Naive thymus-derived CD4-positive, alpha-beta T cell (primary cell): ENCODE measurements at regions of chr7 and their contacts with region 1.

Region 1: GRCh38 chr7:23013715-23014649 is at the start of gene HYCC1:
- DNase-seq: peak; percentile 96 to 100 (median 99)
- ATAC-seq: peak; percentile 99
- H3K4me3 ChIP-seq: peak within 1 kb of the TSS; percentile 82
- H3K4me3 Mint-ChIP-seq: peak within 1 kb of the TSS; percentile 8 to 98 (median 96)
- H3K27ac ChIP-seq: peak within 1 kb of the TSS; percentile 67
- H3K27ac Mint-ChIP-seq: peak within 1 kb of the TSS; percentile 60 to 96 (median 88)
- H3K4me1 ChIP-seq: peaks cover 5 to 15% of the 10 kb centered on the region in 2 donors
- H3K4me1 Mint-ChIP-seq: peaks cover 8 to 35% (median 27%) of the 10 kb centered on the region in 7 donors
- H3K27me3 ChIP-seq: no peaks in the 10 kb centered on the region
- H3K27me3 Mint-ChIP-seq: peaks cover 0 to 3% (median 0%) of the 10 kb centered on the region in 5 donors
- total RNA-seq, gene HYCC1: 14.2 to 67.0 (median 18.3) TPM

Region 2: GRCh38 chr7:22697876-22698606 is 315.9 kb before region 1 on chr7:
- CTCF ChIA-PET with region 1: no interaction called
- POLR2A ChIA-PET with region 1: no interaction called
- intact Hi-C with region 1: loop called in 1 of 2 experiments (anchors 5 kb)
- DNase-seq: peak in 4 of 9 donors; percentile 10 to 25 (median 16)
- ATAC-seq: peak; percentile 79
- H3K4me3 ChIP-seq: no peak overlapping the region
- H3K4me3 Mint-ChIP-seq: peak overlapping the region in 3 of 10 donors; percentile 0 to 69 (median 31)
- H3K27ac ChIP-seq: no peak overlapping the region
- H3K27ac Mint-ChIP-seq: peak overlapping the region in 2 of 9 donors; percentile 23 to 73
- H3K4me1 ChIP-seq: peaks cover 3 to 31% of the 10 kb centered on the region in 2 donors
- H3K4me1 Mint-ChIP-seq: peaks cover 32 to 77% (median 46%) of the 10 kb centered on the region in 7 donors
- H3K27me3 ChIP-seq: no peaks in the 10 kb centered on the region
- H3K27me3 Mint-ChIP-seq: peaks cover 0 to 19% (median 0%) of the 10 kb centered on the region in 5 donors

Region 3: GRCh38 chr7:22854158-22855048 is 159.6 kb before region 1 on chr7:
- CTCF ChIA-PET with region 1: no interaction called
- POLR2A ChIA-PET with region 1: interaction called, 3 read pairs
- intact Hi-C with region 1: loop called (anchors 1 kb)
- DNase-seq: peak in 8 of 9 donors; percentile 9 to 87 (median 70)
- ATAC-seq: peak; percentile 39
- H3K4me3 ChIP-seq: peak overlapping the region; percentile 88
- H3K4me3 Mint-ChIP-seq: peak overlapping the region; percentile 90 to 97 (median 94)
- H3K27ac ChIP-seq: peak overlapping the region; percentile 93
- H3K27ac Mint-ChIP-seq: peak overlapping the region; percentile 85 to 97 (median 92)
- H3K4me1 ChIP-seq: peaks cover 0 to 4% of the 10 kb centered on the region in 2 donors
- H3K4me1 Mint-ChIP-seq: peaks cover 11 to 37% (median 16%) of the 10 kb centered on the region in 7 donors
- H3K27me3 ChIP-seq: no peaks in the 10 kb centered on the region
- H3K27me3 Mint-ChIP-seq: peaks cover 0 to 5% (median 0%) of the 10 kb centered on the region in 5 donors

Region 4: DNA sequence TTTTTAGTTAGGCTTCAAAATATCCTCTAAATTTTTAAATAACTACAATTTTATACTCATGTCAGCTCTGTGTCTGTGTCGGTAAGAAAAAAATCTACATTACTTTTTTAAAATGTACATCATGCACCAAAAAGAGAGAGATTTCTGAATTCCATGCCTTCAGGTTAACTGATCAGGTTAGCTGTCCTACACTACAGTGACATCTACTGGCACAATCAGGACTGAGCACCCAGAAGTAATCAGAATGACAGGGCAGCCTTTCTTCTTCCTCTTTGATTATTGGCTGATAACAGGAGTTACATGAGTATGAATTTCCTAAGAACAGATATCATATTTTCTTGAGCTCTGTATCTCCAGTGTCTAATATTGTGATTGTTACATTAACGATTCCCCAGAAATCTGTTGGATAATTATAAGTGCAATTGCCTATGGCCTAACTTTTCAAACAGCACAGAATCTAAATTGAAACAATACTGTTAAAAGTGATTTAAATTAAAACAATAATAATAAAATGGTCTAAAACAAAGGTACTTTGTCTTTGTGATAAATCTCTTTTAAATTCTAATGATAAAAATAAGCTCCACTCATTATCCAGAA is 41.7 kb after region 1 on chr7:
- CTCF ChIA-PET with region 1: interaction called, 3 read pairs
- POLR2A ChIA-PET with region 1: interaction called, 4 read pairs
- intact Hi-C with region 1: loop called (anchors 1 kb)
- DNase-seq: peak in 8 of 9 donors; percentile 42 to 71 (median 64)
- ATAC-seq: peak; percentile 98
- H3K4me3 ChIP-seq: no peak overlapping the region
- H3K4me3 Mint-ChIP-seq: no peak overlapping the region
- H3K27ac ChIP-seq: no peak overlapping the region
- H3K27ac Mint-ChIP-seq: no peak overlapping the region
- H3K4me1 ChIP-seq: no peaks in the 10 kb centered on the region
- H3K4me1 Mint-ChIP-seq: peaks cover 0 to 10% (median 0%) of the 10 kb centered on the region in 7 donors
- H3K27me3 ChIP-seq: no peaks in the 10 kb centered on the region
- H3K27me3 Mint-ChIP-seq: peaks cover 0 to 7% (median 0%) of the 10 kb centered on the region in 5 donors

Region 5: GRCh38 chr7:23273141-23273599 is 259.2 kb after region 1 on chr7:
- CTCF ChIA-PET with region 1: no interaction called
- POLR2A ChIA-PET with region 1: no interaction called
- intact Hi-C with region 1: loop called in 1 of 2 experiments (anchors 1 kb)
- DNase-seq: peak; percentile 64 to 85 (median 80)
- ATAC-seq: peak; percentile 99
- H3K4me3 ChIP-seq: no peak overlapping the region
- H3K4me3 Mint-ChIP-seq: peak overlapping the region; percentile 14 to 82 (median 70)
- H3K27ac ChIP-seq: no peak overlapping the region
- H3K27ac Mint-ChIP-seq: peak overlapping the region in 4 of 9 donors; percentile 3 to 54 (median 23)
- H3K4me1 ChIP-seq: peaks cover 0 to 4% of the 10 kb centered on the region in 2 donors
- H3K4me1 Mint-ChIP-seq: peaks cover 2 to 16% (median 10%) of the 10 kb centered on the region in 7 donors
- H3K27me3 ChIP-seq: no peaks in the 10 kb centered on the region
- H3K27me3 Mint-ChIP-seq: peaks cover 0 to 9% (median 4%) of the 10 kb centered on the region in 5 donors

Region 6: DNA sequence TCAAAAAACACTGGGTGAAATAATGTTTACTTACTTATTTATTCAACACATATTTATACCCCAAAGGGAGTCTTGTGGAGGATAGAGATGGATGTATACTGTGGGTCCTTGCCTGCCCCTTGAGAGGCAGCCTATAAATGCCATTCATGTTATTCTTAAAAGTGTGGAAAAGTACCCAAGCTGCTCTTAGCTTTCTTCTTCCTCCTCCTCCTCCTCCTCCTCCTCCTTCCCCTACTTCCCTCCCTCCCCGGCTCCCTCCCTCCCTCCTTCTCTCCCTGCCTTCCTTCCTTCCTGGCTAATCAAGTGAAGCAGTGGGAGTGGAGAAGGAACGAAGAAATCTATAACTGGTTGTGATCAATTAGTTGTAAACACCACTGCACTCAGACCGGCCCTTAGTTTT is 477.5 kb after region 1 on chr7:
- CTCF ChIA-PET with region 1: no interaction called
- POLR2A ChIA-PET with region 1: no interaction called
- intact Hi-C with region 1: no loop called
- DNase-seq: no peak
- ATAC-seq: no peak
- H3K4me3 ChIP-seq: no peak overlapping the region
- H3K4me3 Mint-ChIP-seq: peak overlapping the region; percentile 28 to 90 (median 84)
- H3K27ac ChIP-seq: no peak overlapping the region
- H3K27ac Mint-ChIP-seq: peak overlapping the region in 2 of 9 donors; percentile 75 to 82
- H3K4me1 ChIP-seq: peaks cover 4 to 6% of the 10 kb centered on the region in 2 donors
- H3K4me1 Mint-ChIP-seq: peaks cover 3 to 13% (median 10%) of the 10 kb centered on the region in 7 donors
- H3K27me3 ChIP-seq: no peaks in the 10 kb centered on the region
- H3K27me3 Mint-ChIP-seq: no peaks in the 10 kb centered on the region

Region 7: GRCh38 chr7:23531794-23532489 is 518.0 kb after region 1 on chr7 and contains the start of gene TRA2A:
- CTCF ChIA-PET with region 1: interaction called, 7 read pairs
- POLR2A ChIA-PET with region 1: no interaction called
- intact Hi-C with region 1: loop called in 1 of 2 experiments (anchors 5 kb)
- DNase-seq: peak; percentile 93 to 97 (median 95)
- ATAC-seq: peak; percentile 96
- H3K4me3 ChIP-seq: peak within 1 kb of the TSS; percentile 80
- H3K4me3 Mint-ChIP-seq: peak within 1 kb of the TSS; percentile 89 to 100 (median 99)
- H3K27ac ChIP-seq: peak within 1 kb of the TSS; percentile 93
- H3K27ac Mint-ChIP-seq: peak within 1 kb of the TSS; percentile 98 to 100 (median 100)
- H3K4me1 ChIP-seq: peaks cover 30 to 31% of the 10 kb centered on the region in 2 donors
- H3K4me1 Mint-ChIP-seq: peaks cover 28 to 51% (median 46%) of the 10 kb centered on the region in 7 donors
- H3K27me3 ChIP-seq: no peaks in the 10 kb centered on the region
- H3K27me3 Mint-ChIP-seq: no peaks in the 10 kb centered on the region
- total RNA-seq, gene TRA2A: 131 to 263 (median 163) TPM

Region 8: DNA sequence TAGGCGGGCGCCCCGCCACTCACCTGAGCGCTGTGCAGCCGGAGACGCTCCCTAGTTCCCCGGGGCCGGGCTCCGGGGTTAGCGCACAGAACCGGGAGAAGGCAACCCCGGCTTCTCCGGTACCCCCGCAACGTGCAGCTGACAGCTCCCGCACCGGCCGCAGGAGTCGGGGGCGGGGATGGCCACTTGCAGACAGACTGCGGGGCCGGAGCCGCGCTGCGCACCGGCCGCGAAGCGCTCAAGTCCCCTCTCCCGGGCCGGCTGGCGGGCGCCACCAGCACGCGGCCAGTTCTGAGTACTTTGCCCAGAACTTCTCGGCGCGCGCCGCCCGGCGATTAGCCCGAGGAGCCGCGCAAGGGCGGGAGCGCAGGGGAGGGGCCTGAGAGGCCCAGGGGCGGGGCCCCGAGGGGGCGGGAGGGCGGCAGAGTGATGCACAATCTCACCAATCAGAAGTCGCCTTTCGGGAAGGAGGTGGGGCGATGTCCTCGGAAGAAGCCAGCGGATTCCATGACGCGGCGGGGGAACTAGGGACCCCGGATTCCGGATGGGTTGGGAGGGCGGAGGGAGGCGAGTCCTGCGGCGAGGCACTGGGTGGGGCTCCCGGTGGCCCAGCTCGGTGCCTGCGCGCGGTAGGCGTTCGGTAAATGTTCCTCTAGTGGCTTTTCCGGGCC is 1966.0 kb after region 1 on chr7 and contains the start of gene OSBPL3:
- CTCF ChIA-PET with region 1: no interaction called
- POLR2A ChIA-PET with region 1: no interaction called
- intact Hi-C with region 1: loop called in 1 of 2 experiments (anchors 10 kb)
- DNase-seq: peak; percentile 86 to 96 (median 93)
- ATAC-seq: peak; percentile 95
- H3K4me3 ChIP-seq: peak within 1 kb of the TSS; percentile 84
- H3K4me3 Mint-ChIP-seq: peak within 1 kb of the TSS; percentile 93 to 97 (median 96)
- H3K27ac ChIP-seq: peak within 1 kb of the TSS; percentile 69
- H3K27ac Mint-ChIP-seq: peak within 1 kb of the TSS; percentile 73 to 95 (median 89)
- H3K4me1 ChIP-seq: peaks cover 26 to 32% of the 10 kb centered on the region in 2 donors
- H3K4me1 Mint-ChIP-seq: peaks cover 40 to 65% (median 56%) of the 10 kb centered on the region in 7 donors
- H3K27me3 ChIP-seq: no peaks in the 10 kb centered on the region
- H3K27me3 Mint-ChIP-seq: peaks cover 0 to 4% (median 0%) of the 10 kb centered on the region in 5 donors
- total RNA-seq, gene OSBPL3: 17.1 to 75.7 (median 22.7) TPM